A549 (cell line): ENCODE measurements at regions of chr1 and their contacts with region 1.

Region 1: GRCh38 chr1:151098126-151098525 is 27.6 kb downstream of the GABPB2 start:
- DNase-seq: no peak
- ATAC-seq: no peak
- H3K4me3 ChIP-seq: no peak overlapping the region
- H3K27ac ChIP-seq: no peak overlapping the region
- H3K4me1 ChIP-seq: no peaks in the 10 kb centered on the region
- CTCF ChIP-seq: no peak
- EP300 ChIP-seq: no peak
- POLR2A ChIP-seq: no peak
- RAD21 ChIP-seq: no peak

Region 2: DNA sequence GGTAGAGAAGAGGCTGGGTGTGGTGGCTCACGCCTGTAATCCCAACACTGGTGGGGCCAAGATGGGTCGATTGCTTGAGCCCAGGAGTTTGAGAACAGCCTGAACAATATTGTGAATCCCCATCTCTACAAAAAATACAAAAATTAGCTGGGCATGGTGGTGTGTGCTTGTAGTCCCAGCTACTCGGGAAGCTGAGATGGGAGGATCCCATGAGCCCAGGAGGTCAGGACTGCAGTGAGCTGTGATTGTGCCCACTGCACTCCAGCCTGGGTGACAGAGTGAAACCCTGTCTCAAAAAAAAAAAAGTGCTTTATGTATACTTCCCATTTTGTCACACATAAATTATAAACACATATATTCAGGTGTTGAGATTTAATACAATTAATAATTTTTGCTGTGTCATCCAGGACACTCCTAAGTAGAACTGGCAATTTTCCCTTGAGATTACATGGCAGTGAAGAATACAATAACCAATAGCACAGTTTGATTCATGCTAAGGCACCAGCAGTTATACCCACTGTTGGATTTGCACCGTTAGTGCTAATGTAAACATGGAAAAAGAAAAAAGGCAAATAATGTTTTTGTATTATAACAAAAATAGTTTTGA is 12.1 kb before region 1 on chr1:
- CTCF ChIA-PET with region 1: interaction called, 29 read pairs
- POLR2A ChIA-PET with region 1: no interaction called
- DNase-seq: no peak
- ATAC-seq: peak in 1 of 2 experiments; percentile 64; a peak in 3 of 6 replicates
- H3K4me3 ChIP-seq: no peak overlapping the region
- H3K27ac ChIP-seq: peak overlapping the region; percentile 44 to 71
- H3K4me1 ChIP-seq: peaks cover 9% of the 10 kb centered on the region
- CTCF ChIP-seq: no peak
- EP300 ChIP-seq: no peak
- POLR2A ChIP-seq: no peak
- RAD21 ChIP-seq: no peak

Region 3: GRCh38 chr1:151133011-151133806 is 35.1 kb after region 1 on chr1:
- CTCF ChIA-PET with region 1: interaction called, 23 read pairs
- POLR2A ChIA-PET with region 1: no interaction called
- DNase-seq: no peak
- ATAC-seq: peak in 1 of 2 experiments; percentile 18; a peak in 2 of 6 replicates
- H3K4me3 ChIP-seq: no peak overlapping the region
- H3K27ac ChIP-seq: no peak overlapping the region
- H3K4me1 ChIP-seq: no peaks in the 10 kb centered on the region
- CTCF ChIP-seq: no peak
- EP300 ChIP-seq: no peak
- POLR2A ChIP-seq: no peak
- RAD21 ChIP-seq: no peak

Region 4: GRCh38 chr1:151156515-151156819 is 58.3 kb after region 1 on chr1 and contains the start of gene TNFAIP8L2:
- CTCF ChIA-PET with region 1: interaction called, 132 read pairs
- POLR2A ChIA-PET with region 1: interaction called, 5 read pairs
- DNase-seq: no peak
- ATAC-seq: peak; percentile 72 to 82
- H3K4me3 ChIP-seq: no peak within 1 kb of the TSS
- H3K27ac ChIP-seq: no peak within 1 kb of the TSS
- H3K4me1 ChIP-seq: no peaks in the 10 kb centered on the region
- CTCF ChIP-seq: no peak
- EP300 ChIP-seq: no peak
- POLR2A ChIP-seq: no peak
- RAD21 ChIP-seq: no peak
- polyA plus RNA-seq, gene TNFAIP8L2: not detected in 2 replicates

Region 5: GRCh38 chr1:151367658-151368392 is 269.7 kb after region 1 on chr1:
- CTCF ChIA-PET with region 1: no interaction called
- POLR2A ChIA-PET with region 1: no interaction called
- DNase-seq: no peak
- ATAC-seq: no peak
- H3K4me3 ChIP-seq: no peak overlapping the region
- H3K27ac ChIP-seq: no peak overlapping the region
- H3K4me1 ChIP-seq: peaks cover 29% of the 10 kb centered on the region
- CTCF ChIP-seq: no peak
- EP300 ChIP-seq: no peak
- POLR2A ChIP-seq: no peak
- RAD21 ChIP-seq: no peak